H1 (cell line): ENCODE measurements at regions of chr20 and their contacts with region 1.

Region 1: GRCh38 chr20:62590301-62591121 is 51.8 kb upstream of the SLCO4A1 start:
- DNase-seq: no peak
- H3K4me3 ChIP-seq: no peak overlapping the region
- H3K27ac ChIP-seq: no peak overlapping the region
- H3K4me1 ChIP-seq: no peaks in the 10 kb centered on the region; a peak in 1 of 7 replicates
- H3K27me3 ChIP-seq: no peaks in the 10 kb centered on the region; a peak in 1 of 7 replicates
- CTCF ChIP-seq: no peak
- EP300 ChIP-seq: no peak
- POLR2A ChIP-seq: no peak
- RAD21 ChIP-seq: no peak

Region 2: DNA sequence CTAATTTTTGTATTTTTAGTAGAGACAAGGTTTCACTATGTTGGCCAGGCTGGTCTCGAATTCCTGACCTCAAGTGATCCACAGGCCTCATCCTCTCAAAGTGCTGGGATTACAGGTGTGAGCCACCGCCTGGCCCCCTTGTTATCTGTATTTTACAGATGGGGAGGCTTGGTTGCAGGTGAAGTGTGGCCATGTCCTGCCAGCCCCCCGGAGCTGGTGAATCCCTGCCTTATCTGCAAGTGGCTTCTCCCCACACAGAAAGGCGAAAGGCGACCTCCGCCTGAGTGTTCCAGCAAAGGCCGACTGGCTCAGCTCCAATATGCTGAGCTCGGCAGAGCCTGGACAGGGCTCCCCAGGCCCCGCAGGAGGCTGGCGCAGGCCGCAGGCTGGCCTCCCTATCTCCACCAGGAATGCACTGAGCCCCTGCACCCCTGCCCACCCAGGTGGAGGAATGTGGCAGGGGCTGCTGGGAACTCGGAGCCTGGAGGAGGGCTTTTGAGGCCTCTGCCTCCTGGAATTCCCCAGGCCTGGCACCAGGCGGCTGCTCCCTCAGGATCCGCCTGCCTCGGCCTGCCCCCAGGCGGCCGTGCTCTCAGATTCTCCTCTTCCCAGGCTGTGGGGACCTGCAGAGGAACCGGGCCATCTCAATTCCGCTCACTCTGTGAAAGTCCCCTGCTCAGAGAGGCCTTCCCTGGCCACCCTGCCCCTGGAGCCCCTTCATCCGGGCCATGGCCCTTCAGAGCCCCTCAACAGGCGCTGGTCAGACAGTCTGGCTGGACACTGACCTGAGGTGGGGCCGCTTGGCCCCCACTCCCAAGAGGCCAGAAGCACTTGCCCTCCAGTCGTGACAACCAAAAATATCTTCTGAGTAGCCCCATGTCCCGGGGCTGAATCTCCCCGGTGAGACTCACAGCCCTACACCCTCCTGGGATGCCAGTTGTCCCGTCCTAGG is 214.1 kb before region 1 on chr20:
- CTCF ChIA-PET with region 1: no interaction called
- POLR2A ChIA-PET with region 1: no interaction called
- DNase-seq: peak; percentile 78 to 85
- H3K4me3 ChIP-seq: no peak overlapping the region
- H3K27ac ChIP-seq: peak overlapping the region; percentile 71; the same call in 1 of the 2 replicates
- H3K4me1 ChIP-seq: peaks cover 0 to 29% (median 28%) of the 10 kb centered on the region in 4 experiments; a peak in 6 of 7 replicates
- H3K27me3 ChIP-seq: no peaks in the 10 kb centered on the region
- CTCF ChIP-seq: peak; percentile 59 to 97 (median 79)
- EP300 ChIP-seq: peak in 1 of 2 experiments; percentile 61; a peak in 1 of 3 replicates
- POLR2A ChIP-seq: peak in 1 of 2 experiments; percentile 73; a peak in 2 of 3 replicates
- RAD21 ChIP-seq: peak; percentile 68 to 77

Region 3: DNA sequence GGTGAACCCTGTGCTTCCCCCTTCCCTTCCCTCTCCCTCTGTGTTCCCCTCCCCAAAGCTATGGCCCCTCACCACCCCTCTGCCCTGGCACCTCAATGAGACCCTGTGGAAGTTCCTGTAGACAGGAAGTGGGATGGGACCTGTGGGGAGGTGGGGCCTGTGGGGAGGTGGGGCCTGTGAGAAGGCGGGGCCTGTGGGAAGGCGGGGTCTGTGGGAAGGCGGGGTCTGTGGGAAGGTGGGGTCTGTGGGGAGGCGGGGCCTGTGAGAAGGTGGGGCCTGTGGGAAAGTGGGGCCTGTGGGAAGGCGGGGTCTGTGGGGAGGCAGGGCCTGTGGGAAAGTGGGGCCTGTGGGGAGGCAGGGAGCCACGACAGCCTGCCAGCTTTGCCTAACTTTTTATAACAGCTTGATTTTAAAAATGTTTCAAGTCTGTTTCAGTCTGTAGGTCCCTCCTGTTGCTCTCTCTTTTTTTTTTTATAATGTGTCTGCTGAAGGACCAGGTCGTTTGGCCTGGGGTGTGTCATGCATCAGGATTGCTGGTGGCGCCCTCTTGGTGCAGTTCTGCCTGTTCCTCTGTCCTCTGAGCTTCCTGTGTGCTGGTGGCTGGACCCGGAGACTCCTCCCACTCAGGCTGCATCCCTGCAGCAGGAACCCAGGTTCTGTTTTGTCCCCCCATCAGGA is 18.7 kb before region 1 on chr20:
- CTCF ChIA-PET with region 1: interaction called, 45 read pairs
- POLR2A ChIA-PET with region 1: interaction called, 3 read pairs
- DNase-seq: no peak
- H3K4me3 ChIP-seq: no peak overlapping the region
- H3K27ac ChIP-seq: no peak overlapping the region
- H3K4me1 ChIP-seq: peaks cover 0 to 6% (median 0%) of the 10 kb centered on the region in 4 experiments; a peak in 1 of 7 replicates
- H3K27me3 ChIP-seq: no peaks in the 10 kb centered on the region
- CTCF ChIP-seq: peak in 2 of 3 experiments; percentile 44 to 55; a peak in 2 of 4 replicates
- EP300 ChIP-seq: no peak
- POLR2A ChIP-seq: no peak
- RAD21 ChIP-seq: no peak

Region 4: DNA sequence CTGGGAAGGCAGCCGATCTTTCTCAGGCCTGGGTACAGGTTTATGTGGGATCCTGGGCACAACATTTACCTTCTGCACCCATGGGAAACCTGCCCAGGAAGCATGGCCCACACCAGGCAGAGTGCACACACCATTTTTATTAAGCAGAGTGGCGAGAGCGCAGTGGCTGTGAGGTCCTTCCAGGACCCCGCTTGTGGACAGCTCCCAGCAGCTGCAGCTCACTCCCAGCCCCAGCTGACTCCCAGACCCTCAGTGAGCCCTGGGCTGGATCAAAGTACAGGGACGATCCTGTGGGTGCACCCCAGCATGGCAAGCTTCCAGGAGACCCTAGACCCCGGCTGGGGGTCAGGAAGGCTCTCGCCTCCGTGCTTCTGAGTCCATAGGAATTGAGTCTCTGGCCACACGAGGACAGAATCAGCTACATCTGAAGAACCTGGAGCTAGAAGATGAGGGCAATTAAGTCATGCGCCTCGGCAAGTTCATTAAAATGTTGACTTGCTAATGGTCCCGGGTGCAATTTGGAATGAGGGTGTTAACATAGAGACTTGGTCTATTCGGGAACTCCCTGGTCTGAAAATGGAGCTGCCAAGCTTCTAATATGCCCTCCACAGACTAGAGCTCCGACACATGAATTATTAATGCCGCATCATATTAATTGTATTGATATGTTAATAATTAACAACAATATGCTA is 13.6 kb before region 1 on chr20:
- CTCF ChIA-PET with region 1: interaction called, 45 read pairs
- POLR2A ChIA-PET with region 1: interaction called, 3 read pairs
- DNase-seq: no peak
- H3K4me3 ChIP-seq: no peak overlapping the region
- H3K27ac ChIP-seq: no peak overlapping the region
- H3K4me1 ChIP-seq: peaks cover 0 to 12% (median 3%) of the 10 kb centered on the region in 4 experiments; a peak in 3 of 7 replicates
- H3K27me3 ChIP-seq: no peaks in the 10 kb centered on the region
- CTCF ChIP-seq: no peak
- EP300 ChIP-seq: no peak
- POLR2A ChIP-seq: no peak
- RAD21 ChIP-seq: no peak

Region 5: GRCh38 chr20:62752671-62753501 is 162.4 kb after region 1 on chr20:
- CTCF ChIA-PET with region 1: no interaction called
- POLR2A ChIA-PET with region 1: no interaction called
- DNase-seq: no peak
- H3K4me3 ChIP-seq: no peak overlapping the region
- H3K27ac ChIP-seq: no peak overlapping the region
- H3K4me1 ChIP-seq: peaks cover 0 to 10% (median 6%) of the 10 kb centered on the region in 4 experiments; a peak in 5 of 7 replicates
- H3K27me3 ChIP-seq: no peaks in the 10 kb centered on the region; a peak in 2 of 7 replicates
- CTCF ChIP-seq: no peak
- EP300 ChIP-seq: no peak
- POLR2A ChIP-seq: no peak
- RAD21 ChIP-seq: no peak